ENCODE measurements at regions of chr2 and their contacts with region 1.

Region 1: DNA sequence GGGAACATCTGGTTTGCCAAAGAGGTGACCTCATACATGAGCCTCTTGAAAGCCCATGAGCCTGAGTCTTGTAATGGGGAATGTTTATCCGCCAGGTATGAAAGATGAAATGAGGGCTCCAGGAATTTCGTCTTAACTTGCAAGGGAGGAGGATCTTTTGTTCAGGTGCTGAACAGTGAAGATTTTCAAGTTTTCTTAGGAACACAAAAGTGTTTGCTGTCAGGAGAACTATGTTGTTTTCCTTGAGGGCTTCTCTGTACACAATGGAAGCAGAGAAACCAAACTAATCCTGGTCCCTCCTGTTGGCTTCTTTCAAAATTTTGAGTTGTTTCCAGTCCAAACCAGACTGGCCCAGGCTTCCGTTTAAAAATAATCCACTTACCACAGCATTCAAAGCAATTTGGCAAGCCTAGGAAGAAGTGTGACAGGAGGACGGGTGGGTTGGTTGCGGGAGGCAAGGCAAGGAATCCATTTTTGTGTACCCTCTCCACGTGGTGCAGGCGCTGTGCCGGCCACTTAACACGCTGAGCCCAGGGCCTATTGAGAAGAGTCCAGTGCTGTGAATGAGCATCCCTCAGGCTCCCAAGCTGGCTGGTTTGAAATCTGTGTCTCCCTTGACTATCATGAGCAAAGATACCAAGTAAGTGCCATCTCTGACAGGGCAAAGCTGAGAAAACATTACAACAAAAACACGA is 161.1 kb downstream of the NCKAP5 start:
- DNase-seq: no peak
- ATAC-seq: no peak
- H3K4me3 ChIP-seq: no peak overlapping the region
- H3K27ac ChIP-seq: no peak overlapping the region
- H3K4me1 ChIP-seq: peaks cover 4% of the 10 kb centered on the region
- H3K27me3 ChIP-seq: no peaks in the 10 kb centered on the region
- CTCF ChIP-seq: no peak
- POLR2A ChIP-seq: no peak
- RAD21 ChIP-seq: no peak

Region 2: GRCh38 chr2:133171393-133172004 is 235.7 kb before region 1 on chr2:
- CTCF ChIA-PET with region 1: no interaction called
- POLR2A ChIA-PET with region 1: no interaction called
- dilution Hi-C with region 1: no loop called
- in situ Hi-C with region 1: no loop called
- intact Hi-C with region 1: no loop called
- DNase-seq: peak; percentile 74
- ATAC-seq: peak; percentile 64
- H3K4me3 ChIP-seq: no peak overlapping the region
- H3K27ac ChIP-seq: no peak overlapping the region
- H3K4me1 ChIP-seq: peaks cover 11% of the 10 kb centered on the region
- H3K27me3 ChIP-seq: no peaks in the 10 kb centered on the region
- CTCF ChIP-seq: peak; percentile 80
- POLR2A ChIP-seq: no peak
- RAD21 ChIP-seq: peak; percentile 87

Region 3: GRCh38 chr2:133193544-133194361 is 213.4 kb before region 1 on chr2:
- CTCF ChIA-PET with region 1: no interaction called
- POLR2A ChIA-PET with region 1: no interaction called
- dilution Hi-C with region 1: no loop called
- in situ Hi-C with region 1: no loop called
- intact Hi-C with region 1: loop called (anchors 10 kb)
- DNase-seq: peak; percentile 41
- ATAC-seq: no peak; the same call in 1 of the 2 replicates
- H3K4me3 ChIP-seq: no peak overlapping the region
- H3K27ac ChIP-seq: no peak overlapping the region
- H3K4me1 ChIP-seq: peaks cover 12% of the 10 kb centered on the region
- H3K27me3 ChIP-seq: no peaks in the 10 kb centered on the region
- CTCF ChIP-seq: no peak
- POLR2A ChIP-seq: no peak
- RAD21 ChIP-seq: no peak

Region 4: DNA sequence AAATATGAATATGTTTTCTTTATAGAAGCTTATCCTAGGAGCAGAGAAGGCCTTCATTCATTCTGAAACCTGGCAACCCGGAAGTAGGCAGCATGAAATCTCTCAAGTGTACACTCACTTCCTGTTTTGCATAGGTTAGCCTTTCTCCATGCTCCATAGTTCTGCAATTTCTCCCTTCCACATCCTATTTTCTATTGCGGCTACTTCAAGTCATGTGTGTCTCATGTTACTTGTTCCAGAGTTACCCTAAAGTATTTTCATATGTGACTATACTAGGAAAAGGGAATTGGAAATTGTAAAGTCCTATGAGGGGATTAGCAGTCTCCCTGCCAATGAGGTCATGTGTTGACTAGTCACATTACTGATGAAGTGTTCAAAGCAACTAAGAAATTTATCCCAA is 159.6 kb before region 1 on chr2:
- CTCF ChIA-PET with region 1: no interaction called
- POLR2A ChIA-PET with region 1: no interaction called
- dilution Hi-C with region 1: no loop called
- in situ Hi-C with region 1: no loop called
- intact Hi-C with region 1: no loop called
- DNase-seq: peak; percentile 29
- ATAC-seq: peak; percentile 45
- H3K4me3 ChIP-seq: no peak overlapping the region
- H3K27ac ChIP-seq: no peak overlapping the region
- H3K4me1 ChIP-seq: peaks cover 10% of the 10 kb centered on the region
- H3K27me3 ChIP-seq: no peaks in the 10 kb centered on the region
- CTCF ChIP-seq: no peak
- POLR2A ChIP-seq: no peak
- RAD21 ChIP-seq: no peak

Measured in IMR-90 (cell line).